ENCODE measurements at regions of chr6 and their contacts with region 1.

Region 1: DNA sequence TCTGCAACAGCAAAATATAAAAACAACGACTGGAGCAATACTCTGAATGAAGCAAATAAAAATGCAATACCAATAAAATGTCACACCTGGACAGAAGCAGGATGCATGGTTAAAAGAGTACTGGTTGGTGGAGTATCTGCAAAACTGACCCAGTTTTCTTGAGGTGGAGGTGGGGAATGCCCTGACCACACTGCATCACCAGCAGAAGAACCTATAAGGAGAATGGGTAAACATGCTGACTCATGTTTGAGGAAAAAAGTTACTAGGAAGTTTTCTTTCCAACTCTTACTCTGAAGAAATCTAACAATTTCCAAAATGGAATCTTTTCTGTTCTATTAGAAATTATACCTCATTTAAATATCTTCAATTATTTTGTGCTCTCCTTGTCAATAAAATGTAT is 43.6 kb downstream of the REPS1 start:
- DNase-seq: no peak
- H3K4me3 ChIP-seq: no peak overlapping the region
- H3K27ac ChIP-seq: no peak overlapping the region
- H3K4me1 ChIP-seq: peaks cover under 1% of the 10 kb centered on the region
- H3K27me3 ChIP-seq: no peaks in the 10 kb centered on the region
- CTCF ChIP-seq: no peak
- EP300 ChIP-seq: no peak
- POLR2A ChIP-seq: no peak

Region 2: DNA sequence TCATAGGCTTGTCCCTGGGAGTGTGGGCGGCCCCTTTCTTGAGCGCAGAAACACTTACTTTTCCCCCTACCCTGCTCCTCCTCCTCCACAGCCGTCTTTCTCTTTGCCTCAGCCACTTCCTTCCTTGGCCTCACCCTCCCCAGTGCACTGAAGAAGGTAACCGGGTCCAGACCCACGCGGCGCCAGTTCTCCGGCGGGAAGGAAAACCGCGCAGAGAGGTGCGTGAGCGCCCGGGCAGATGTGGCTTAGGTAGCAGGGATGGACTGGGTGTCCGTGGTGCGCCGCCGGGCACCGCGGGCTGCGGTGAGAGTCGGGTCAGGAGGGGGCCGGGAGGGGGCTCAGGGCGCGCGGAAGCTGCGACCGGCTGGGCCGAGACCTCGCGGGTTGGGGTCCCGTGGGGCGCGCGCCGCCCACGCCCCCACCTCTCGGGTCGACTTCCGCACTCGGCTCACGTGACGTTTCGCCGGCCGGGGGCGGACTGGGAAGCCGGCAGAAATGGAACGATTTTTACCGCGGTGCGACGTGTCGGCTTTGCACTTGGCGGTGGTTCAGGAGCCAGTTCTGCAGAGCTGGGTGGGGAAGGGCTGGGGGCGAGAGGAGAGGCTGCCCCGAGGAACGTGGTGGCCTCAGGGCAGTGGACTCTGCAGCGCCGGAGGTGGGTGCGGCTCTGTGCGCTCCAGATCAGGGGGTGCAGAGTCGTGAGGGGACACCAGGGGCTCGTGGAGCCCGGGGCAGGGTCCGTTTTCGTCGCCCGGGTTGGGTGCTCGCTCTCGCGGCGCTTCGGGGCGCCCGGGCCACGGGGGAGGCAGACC is 84.5 kb after region 1 on chr6 and contains the start of gene ABRACL:
- intact Hi-C with region 1: loop called in 1 of 4 experiments (anchors 10 kb)
- DNase-seq: peak; percentile 26 to 60 (median 47)
- H3K4me3 ChIP-seq: peak within 1 kb of the TSS; percentile 90
- H3K27ac ChIP-seq: peak within 1 kb of the TSS in 1 of 2 donors; percentile 27
- H3K4me1 ChIP-seq: no peaks in the 10 kb centered on the region
- H3K27me3 ChIP-seq: no peaks in the 10 kb centered on the region
- CTCF ChIP-seq: no peak
- EP300 ChIP-seq: no peak
- POLR2A ChIP-seq: no peak
- total RNA-seq, gene ABRACL: 1.7 to 21.9 (median 5.2) TPM